ENCODE measurements at regions of chr20 and their contacts with region 1.

Region 1: GRCh38 chr20:20712474-20713243 is at the start of gene RALGAPA2:
- DNase-seq: peak; percentile 97 to 99
- H3K4me3 ChIP-seq: peak within 1 kb of the TSS; percentile 75
- H3K4me3 Mint-ChIP-seq: peak within 1 kb of the TSS; percentile 86
- H3K27ac Mint-ChIP-seq: peak within 1 kb of the TSS; percentile 86
- H3K4me1 ChIP-seq: peaks cover 15% of the 10 kb centered on the region; the same call in 1 of the 2 replicates
- H3K4me1 Mint-ChIP-seq: no peaks in the 10 kb centered on the region
- H3K27me3 ChIP-seq: no peaks in the 10 kb centered on the region
- H3K27me3 Mint-ChIP-seq: no peaks in the 10 kb centered on the region
- CTCF ChIP-seq: no peak
- total RNA-seq, gene RALGAPA2: 17.3 and 19.1 TPM in 2 replicates

Region 2: DNA sequence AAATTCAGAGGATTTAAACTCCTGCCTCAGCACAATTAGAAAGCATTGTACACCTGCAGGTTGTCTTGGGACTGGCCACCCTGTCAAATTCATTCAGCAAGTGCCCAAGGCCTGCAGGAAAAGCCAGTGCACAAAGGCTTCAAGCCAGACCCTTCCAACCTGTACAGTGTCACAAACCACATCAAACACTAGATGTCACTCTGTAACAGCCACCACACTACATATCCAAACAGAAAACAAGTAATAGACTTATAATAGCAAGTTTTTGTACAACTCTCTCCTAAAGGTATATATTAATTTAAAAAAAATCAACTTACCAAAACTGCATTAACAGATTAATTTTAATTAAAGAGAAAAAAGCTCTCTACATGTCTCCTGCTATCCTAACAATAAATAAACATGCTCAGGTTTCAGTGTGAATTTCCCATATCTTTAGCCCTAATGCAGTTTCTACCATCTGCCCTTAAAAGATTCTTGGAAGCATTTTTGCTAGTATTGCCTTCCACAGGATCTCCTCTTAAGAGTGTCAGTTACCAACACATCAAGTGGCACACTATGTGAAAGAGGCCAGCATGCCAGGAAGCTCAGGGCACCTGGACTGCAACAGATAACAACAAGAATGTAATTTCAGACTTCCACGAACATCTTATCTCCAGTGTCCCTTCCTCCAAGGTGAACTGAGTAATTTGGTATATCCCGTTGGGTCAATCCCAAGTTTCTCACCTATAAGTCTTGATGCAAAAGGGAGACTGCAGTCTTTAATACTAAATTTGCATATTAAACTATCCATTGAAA is 47.7 kb before region 1 on chr20:
- CTCF ChIA-PET with region 1: no interaction called
- POLR2A ChIA-PET with region 1: no interaction called
- intact Hi-C with region 1: loop called (anchors 2 kb)
- DNase-seq: peak in 1 of 2 experiments; percentile 34
- H3K4me3 ChIP-seq: no peak overlapping the region
- H3K4me3 Mint-ChIP-seq: no peak overlapping the region
- H3K27ac Mint-ChIP-seq: no peak overlapping the region
- H3K4me1 ChIP-seq: no peaks in the 10 kb centered on the region
- H3K4me1 Mint-ChIP-seq: no peaks in the 10 kb centered on the region
- H3K27me3 ChIP-seq: no peaks in the 10 kb centered on the region
- H3K27me3 Mint-ChIP-seq: no peaks in the 10 kb centered on the region
- CTCF ChIP-seq: peak; percentile 55 to 60

Region 3: DNA sequence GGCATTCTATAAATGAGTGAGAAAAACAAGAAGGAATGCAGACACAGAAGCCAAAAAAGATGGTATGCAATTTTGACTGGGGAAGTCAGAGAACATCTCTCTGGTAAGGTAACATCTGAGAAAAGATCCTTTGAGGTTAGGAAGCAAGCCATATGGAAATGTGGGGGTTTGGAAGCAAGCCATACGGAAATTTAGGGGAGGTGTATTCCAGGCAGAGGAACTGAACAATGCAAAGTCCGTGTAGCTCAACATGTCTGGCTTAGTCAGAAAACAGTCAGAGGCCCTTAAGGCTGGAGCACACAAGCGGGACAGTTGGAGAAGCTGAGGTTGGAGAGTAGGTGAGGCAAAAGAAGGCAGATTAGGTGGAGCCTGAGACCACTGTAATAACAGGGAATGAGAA is 35.5 kb before region 1 on chr20:
- CTCF ChIA-PET with region 1: no interaction called
- POLR2A ChIA-PET with region 1: no interaction called
- intact Hi-C with region 1: no loop called
- DNase-seq: no peak
- H3K4me3 ChIP-seq: no peak overlapping the region
- H3K4me3 Mint-ChIP-seq: no peak overlapping the region
- H3K27ac Mint-ChIP-seq: no peak overlapping the region
- H3K4me1 ChIP-seq: no peaks in the 10 kb centered on the region
- H3K4me1 Mint-ChIP-seq: no peaks in the 10 kb centered on the region
- H3K27me3 ChIP-seq: no peaks in the 10 kb centered on the region
- H3K27me3 Mint-ChIP-seq: no peaks in the 10 kb centered on the region
- CTCF ChIP-seq: no peak

Region 4: DNA sequence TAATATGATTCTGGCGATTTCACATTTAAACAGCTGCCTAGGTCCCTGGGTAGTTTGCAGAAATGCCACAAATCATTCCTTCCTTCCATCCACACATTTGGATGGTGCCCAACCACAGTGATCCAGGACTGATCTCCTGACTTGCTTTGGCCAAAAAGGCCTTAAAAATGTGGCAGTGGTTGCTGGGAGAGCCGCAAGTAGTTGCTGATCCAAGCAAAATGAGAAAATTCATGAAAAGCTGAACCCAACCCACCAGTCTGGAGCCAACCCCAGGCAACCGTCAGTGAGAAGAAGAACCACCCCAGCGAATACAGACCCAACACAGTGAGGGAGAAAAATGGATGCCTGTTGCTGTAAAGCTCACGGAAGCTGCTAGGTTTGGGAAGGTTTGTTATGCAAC is 25.3 kb before region 1 on chr20:
- CTCF ChIA-PET with region 1: no interaction called
- POLR2A ChIA-PET with region 1: interaction called, 12 read pairs
- intact Hi-C with region 1: no loop called
- DNase-seq: no peak
- H3K4me3 ChIP-seq: no peak overlapping the region
- H3K4me3 Mint-ChIP-seq: no peak overlapping the region
- H3K27ac Mint-ChIP-seq: no peak overlapping the region
- H3K4me1 ChIP-seq: no peaks in the 10 kb centered on the region
- H3K4me1 Mint-ChIP-seq: no peaks in the 10 kb centered on the region
- H3K27me3 ChIP-seq: no peaks in the 10 kb centered on the region
- H3K27me3 Mint-ChIP-seq: no peaks in the 10 kb centered on the region
- CTCF ChIP-seq: no peak

Measured in Caco-2 (cell line).